Dorsolateral prefrontal cortex (tissue), 120 donors: ENCODE measurements at regions of chr14 and their contacts with region 1.

Region 1: GRCh38 chr14:72573725-72574417 is 320.0 kb downstream of the DPF3 start:
- DNase-seq: peak in 6 of 10 donors; percentile 35 to 72 (median 62)
- H3K4me3 ChIP-seq: no peak overlapping the region
- H3K27ac ChIP-seq: peak overlapping the region in 22 of 59 donors; percentile 3 to 85 (median 39)
- H3K27me3 ChIP-seq: no peaks in the 10 kb centered on the region
- CTCF ChIP-seq: no peak

Region 2: DNA sequence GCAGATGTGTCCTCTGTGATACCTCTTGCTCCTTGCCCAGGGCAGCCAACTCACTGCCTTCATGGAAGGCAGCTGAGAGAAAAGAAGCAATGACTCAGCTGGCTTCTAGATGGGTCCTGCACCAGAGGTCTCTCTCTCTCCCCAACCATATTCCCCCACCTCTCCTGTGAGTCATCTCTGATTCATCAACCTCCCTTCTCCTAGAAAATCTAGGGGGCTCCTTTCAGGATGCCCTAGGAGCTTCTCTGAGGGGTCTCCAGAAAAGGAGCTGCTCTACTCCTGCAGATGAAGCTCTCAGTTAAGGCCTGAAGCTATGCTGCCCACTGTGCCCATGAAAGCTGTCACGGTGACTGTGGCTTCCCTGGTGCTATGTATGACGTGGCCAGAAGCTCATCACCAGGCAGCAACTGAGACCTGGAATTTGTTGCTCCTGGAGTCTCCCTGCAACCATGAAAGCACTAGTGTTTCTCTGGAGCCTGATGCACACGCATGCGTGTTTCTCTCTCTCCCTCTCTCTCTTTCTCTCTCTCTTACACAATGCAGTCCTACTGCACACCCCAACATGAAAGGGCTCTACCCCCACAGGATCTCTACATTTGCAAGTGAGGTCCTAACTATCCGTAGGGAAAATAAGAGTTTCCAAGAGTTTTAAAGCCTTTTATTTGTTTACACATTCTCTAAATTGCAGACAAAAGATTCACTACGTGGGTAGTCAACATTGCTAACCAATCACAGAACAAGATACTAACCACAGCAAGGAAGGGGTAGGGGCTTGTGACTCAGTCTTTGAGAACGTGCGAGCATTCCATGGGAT is 34.7 kb after region 1 on chr14:
- intact Hi-C with region 1: loop called in 1 of 2 experiments (anchors 1 kb)
- DNase-seq: peak in 3 of 10 donors; percentile 41 to 58 (median 55)
- H3K4me3 ChIP-seq: no peak overlapping the region
- H3K27ac ChIP-seq: peak overlapping the region in 47 of 59 donors; percentile 2 to 93 (median 52)
- H3K27me3 ChIP-seq: no peaks in the 10 kb centered on the region
- CTCF ChIP-seq: no peak

Region 3: GRCh38 chr14:73116079-73116665 is 542.3 kb after region 1 on chr14:
- intact Hi-C with region 1: no loop called
- DNase-seq: no peak
- H3K4me3 ChIP-seq: no peak overlapping the region
- H3K27ac ChIP-seq: peak overlapping the region in 5 of 59 donors; percentile 2 to 37 (median 18)
- H3K27me3 ChIP-seq: no peaks in the 10 kb centered on the region
- CTCF ChIP-seq: no peak